ENCODE measurements at regions of chr1 and their contacts with region 1.

Region 1: GRCh38 chr1:186985889-186986491 is 157.2 kb downstream of the PLA2G4A start:
- DNase-seq: no peak
- H3K4me3 Mint-ChIP-seq: no peak overlapping the region
- H3K27ac Mint-ChIP-seq: no peak overlapping the region
- H3K4me1 Mint-ChIP-seq: peaks cover 8% of the 10 kb centered on the region
- H3K27me3 Mint-ChIP-seq: peaks cover 2% of the 10 kb centered on the region

Region 2: DNA sequence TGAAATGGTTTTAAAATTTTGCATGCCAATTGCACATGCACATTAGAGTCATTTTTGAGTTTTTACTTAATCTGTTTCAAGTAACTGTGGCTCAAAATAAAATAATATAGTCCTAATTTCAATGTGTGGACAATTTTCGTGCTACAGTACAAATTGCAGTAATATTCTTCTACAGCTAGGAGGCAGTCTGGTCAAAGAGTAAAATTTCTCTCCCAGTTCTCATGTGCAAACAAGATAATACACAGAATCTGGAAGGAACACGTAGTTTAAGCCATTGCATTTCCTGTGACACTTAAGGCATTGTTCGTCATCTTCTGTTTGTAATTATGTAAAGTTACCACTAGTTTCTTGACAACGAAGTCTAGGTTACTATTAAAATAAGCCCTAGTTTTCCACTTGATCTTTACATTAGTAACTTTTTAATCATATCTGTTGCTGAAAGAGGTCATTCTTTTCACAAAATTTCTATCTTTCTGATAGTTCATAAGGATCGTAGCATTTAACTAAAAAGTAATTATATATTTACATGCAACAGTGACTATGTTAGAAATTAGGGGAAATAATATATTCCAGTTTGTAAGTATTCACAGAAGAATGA is 581.4 kb before region 1 on chr1:
- intact Hi-C with region 1: loop called (anchors 1 kb)
- DNase-seq: no peak
- H3K4me3 Mint-ChIP-seq: no peak overlapping the region
- H3K27ac Mint-ChIP-seq: no peak overlapping the region
- H3K4me1 Mint-ChIP-seq: peaks cover 14% of the 10 kb centered on the region
- H3K27me3 Mint-ChIP-seq: no peaks in the 10 kb centered on the region

Region 3: GRCh38 chr1:186605762-186606350 is 380.1 kb before region 1 on chr1:
- intact Hi-C with region 1: loop called (anchors 1 kb)
- DNase-seq: no peak
- H3K4me3 Mint-ChIP-seq: no peak overlapping the region
- H3K27ac Mint-ChIP-seq: peak overlapping the region; percentile 26
- H3K4me1 Mint-ChIP-seq: peaks cover 7% of the 10 kb centered on the region
- H3K27me3 Mint-ChIP-seq: peaks cover 60% of the 10 kb centered on the region

Region 4: DNA sequence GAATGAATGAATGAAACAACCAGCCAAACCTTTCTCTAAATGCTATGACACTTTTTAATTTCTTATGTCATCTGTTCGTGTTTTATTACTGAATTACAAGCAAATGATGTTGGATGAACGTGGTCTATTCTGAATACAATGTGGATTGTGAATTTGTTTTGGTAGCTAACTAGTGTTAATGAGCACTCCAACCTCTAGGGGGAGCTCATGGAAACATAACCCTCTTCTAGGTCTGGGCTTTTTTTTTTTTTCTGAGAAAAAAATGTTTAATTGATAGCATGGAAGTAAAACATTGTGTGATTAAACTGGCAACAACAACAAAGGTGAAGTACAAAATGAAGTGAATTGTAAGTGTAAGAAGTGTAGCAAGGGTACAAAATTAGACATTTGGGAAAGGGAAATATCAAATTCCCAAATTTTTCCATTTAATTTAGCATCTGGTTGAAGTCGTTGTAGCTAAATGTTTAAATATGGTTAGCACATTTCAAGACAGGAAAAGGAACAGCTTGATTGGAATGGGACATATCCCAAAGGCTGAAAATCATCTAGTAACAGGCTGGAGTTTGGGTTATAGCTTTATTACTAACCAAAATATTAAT is 263.2 kb before region 1 on chr1:
- intact Hi-C with region 1: loop called (anchors 2 kb)
- DNase-seq: no peak
- H3K4me3 Mint-ChIP-seq: no peak overlapping the region
- H3K27ac Mint-ChIP-seq: no peak overlapping the region
- H3K4me1 Mint-ChIP-seq: peaks cover 13% of the 10 kb centered on the region
- H3K27me3 Mint-ChIP-seq: peaks cover 10% of the 10 kb centered on the region

Region 5: GRCh38 chr1:186899577-186899976 is 86.4 kb before region 1 on chr1:
- intact Hi-C with region 1: loop called (anchors 5 kb)
- DNase-seq: no peak
- H3K4me3 Mint-ChIP-seq: no peak overlapping the region
- H3K27ac Mint-ChIP-seq: peak overlapping the region; percentile 85
- H3K4me1 Mint-ChIP-seq: peaks cover 51% of the 10 kb centered on the region
- H3K27me3 Mint-ChIP-seq: no peaks in the 10 kb centered on the region